ENCODE measurements at regions of chr2 and their contacts with region 1.

Region 1: DNA sequence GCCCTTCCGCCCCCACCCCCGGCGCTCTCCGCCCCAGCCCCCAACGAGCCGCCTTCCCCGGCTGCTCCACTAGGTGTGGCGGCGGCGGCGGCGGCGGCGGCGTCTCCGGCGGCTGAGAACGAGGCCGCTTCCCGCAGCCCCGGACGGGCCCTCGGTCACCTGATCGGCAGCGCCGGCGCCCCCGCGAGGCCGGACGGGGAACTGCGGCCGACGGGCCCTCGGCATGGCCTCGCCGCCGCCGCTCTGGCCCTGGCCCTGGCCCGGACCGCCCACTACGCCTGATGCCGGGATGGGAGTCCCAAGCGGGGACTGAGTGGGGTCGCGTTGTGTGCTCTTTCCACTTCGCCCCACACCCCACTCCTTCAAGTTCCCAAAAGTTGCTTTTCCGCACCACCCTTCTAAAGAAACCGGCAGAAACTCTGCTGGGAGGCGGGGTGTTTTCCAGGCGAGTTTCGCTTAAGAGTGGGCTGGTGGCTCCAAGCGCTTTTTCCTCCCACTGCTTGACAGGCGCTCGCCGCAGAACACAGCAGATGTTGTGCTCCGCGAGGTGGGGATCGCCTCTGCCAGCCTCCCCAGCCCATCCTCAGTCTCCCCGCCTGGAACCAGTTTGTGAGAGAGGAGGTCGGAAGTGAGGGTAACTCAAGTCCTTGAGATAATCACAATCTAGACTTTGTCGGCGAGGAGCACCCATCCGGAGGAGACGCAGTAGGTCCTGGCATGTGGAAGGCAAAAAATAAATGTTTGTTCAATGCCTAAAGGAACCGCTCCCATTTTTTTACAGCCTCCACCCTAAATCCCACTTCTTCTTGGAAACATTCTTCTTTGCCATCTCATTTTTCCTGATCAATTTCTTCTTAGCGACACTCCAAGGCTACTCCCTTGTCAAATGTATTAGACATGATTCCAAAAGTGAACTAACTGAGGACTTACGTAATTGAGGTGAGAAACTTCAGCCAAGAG is at the start of gene NCKAP1:
- DNase-seq: peak; percentile 73
- H3K4me3 Mint-ChIP-seq: peak within 1 kb of the TSS; percentile 82
- H3K27ac Mint-ChIP-seq: peak within 1 kb of the TSS; percentile 12
- H3K4me1 Mint-ChIP-seq: peaks cover 22% of the 10 kb centered on the region
- H3K27me3 Mint-ChIP-seq: peaks cover 67% of the 10 kb centered on the region
- total RNA-seq, gene NCKAP1: 13.2 and 20.0 TPM in 2 replicates

Region 2: GRCh38 chr2:182715896-182716668 is 322.5 kb before region 1 on chr2 and contains the start of gene DNAJC10:
- intact Hi-C with region 1: loop called (anchors 1 kb)
- DNase-seq: peak; percentile 84
- H3K4me3 Mint-ChIP-seq: no peak within 1 kb of the TSS
- H3K27ac Mint-ChIP-seq: no peak within 1 kb of the TSS
- H3K4me1 Mint-ChIP-seq: peaks cover 5% of the 10 kb centered on the region
- H3K27me3 Mint-ChIP-seq: peaks cover 16% of the 10 kb centered on the region
- total RNA-seq, gene DNAJC10: 63.5 and 64.6 TPM in 2 replicates

Region 3: DNA sequence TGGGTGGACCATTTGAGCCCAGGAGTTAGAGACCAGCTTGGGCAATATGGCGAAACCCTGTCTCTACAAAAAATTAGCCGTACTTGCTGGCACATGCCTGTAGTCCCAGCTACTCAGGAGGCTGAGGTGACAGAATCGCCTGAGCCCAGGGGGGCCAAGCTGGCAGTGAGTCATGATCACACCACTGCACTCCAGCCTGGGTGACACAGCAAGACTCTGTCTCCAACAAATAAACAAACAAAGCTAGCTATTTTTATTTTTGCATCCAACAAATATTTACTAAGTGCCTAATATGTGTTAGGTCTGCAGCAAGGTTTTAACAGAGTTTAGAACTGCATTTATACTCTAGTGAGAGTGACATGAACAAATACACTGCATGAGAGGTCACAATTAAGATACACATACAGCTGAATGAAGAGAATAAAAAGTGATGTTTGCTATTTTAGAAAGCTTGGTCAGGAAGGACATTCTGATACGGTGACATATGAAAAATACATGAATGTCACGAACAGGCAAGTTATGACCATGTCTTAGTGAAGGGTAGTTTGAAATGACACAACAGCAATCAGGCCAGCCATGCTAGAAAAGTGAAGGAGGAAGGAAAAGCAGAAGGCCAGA is 88.9 kb before region 1 on chr2:
- intact Hi-C with region 1: loop called (anchors 5 kb)
- DNase-seq: no peak
- H3K4me3 Mint-ChIP-seq: no peak overlapping the region
- H3K27ac Mint-ChIP-seq: no peak overlapping the region
- H3K4me1 Mint-ChIP-seq: peaks cover 17% of the 10 kb centered on the region
- H3K27me3 Mint-ChIP-seq: no peaks in the 10 kb centered on the region

Region 4: GRCh38 chr2:182977463-182977862 is 61.2 kb before region 1 on chr2:
- intact Hi-C with region 1: no loop called
- DNase-seq: no peak
- H3K4me3 Mint-ChIP-seq: no peak overlapping the region
- H3K27ac Mint-ChIP-seq: no peak overlapping the region
- H3K4me1 Mint-ChIP-seq: peaks cover 2% of the 10 kb centered on the region
- H3K27me3 Mint-ChIP-seq: no peaks in the 10 kb centered on the region

Region 5: DNA sequence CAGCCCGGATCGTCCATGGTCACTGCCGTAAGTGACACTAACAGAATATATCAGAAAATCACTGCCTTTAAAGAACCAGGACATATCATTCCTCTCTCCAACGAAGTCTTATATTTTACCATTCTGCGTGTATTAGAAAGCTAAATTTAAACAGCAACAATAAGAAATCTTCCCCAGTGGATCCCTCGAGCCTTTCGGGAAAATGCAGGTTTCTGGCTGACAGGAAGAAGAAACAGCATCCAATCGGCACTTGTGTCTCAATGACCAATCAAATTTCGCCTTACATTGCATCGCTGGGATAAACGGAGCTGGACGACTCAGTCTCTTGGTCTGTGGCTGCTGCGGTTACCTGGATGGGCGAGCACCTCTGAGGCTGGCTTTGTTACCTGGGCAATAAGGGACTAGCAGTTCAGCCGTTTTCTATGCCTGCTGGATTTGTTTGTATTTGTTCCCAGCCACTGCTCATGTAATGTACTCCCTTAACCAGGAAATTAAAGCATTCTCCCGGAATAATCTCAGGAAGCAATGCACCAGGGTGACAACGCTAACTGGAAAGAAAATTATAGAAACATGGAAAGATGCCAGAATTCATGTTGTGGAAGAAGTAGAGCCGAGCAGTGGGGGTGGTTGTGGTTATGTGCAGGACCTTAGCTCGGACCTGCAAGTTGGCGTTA is 40.0 kb after region 1 on chr2 and contains the start of gene DUSP19:
- intact Hi-C with region 1: loop called (anchors 1 kb)
- DNase-seq: peak; percentile 72
- H3K4me3 Mint-ChIP-seq: peak within 1 kb of the TSS; percentile 83
- H3K27ac Mint-ChIP-seq: peak within 1 kb of the TSS; percentile 21
- H3K4me1 Mint-ChIP-seq: peaks cover 7% of the 10 kb centered on the region
- H3K27me3 Mint-ChIP-seq: peaks cover 7% of the 10 kb centered on the region
- total RNA-seq, gene DUSP19: 1.6 and 1.9 TPM in 2 replicates

Region 6: GRCh38 chr2:183124222-183124956 is 85.8 kb after region 1 on chr2 and contains the start of gene NUP35:
- intact Hi-C with region 1: loop called (anchors 1 kb)
- DNase-seq: peak; percentile 74
- H3K4me3 Mint-ChIP-seq: peak within 1 kb of the TSS; percentile 94
- H3K27ac Mint-ChIP-seq: peak within 1 kb of the TSS; percentile 98
- H3K4me1 Mint-ChIP-seq: peaks cover 32% of the 10 kb centered on the region
- H3K27me3 Mint-ChIP-seq: peaks cover 4% of the 10 kb centered on the region
- total RNA-seq, gene NUP35: 30.9 and 39.3 TPM in 2 replicates

Region 7: DNA sequence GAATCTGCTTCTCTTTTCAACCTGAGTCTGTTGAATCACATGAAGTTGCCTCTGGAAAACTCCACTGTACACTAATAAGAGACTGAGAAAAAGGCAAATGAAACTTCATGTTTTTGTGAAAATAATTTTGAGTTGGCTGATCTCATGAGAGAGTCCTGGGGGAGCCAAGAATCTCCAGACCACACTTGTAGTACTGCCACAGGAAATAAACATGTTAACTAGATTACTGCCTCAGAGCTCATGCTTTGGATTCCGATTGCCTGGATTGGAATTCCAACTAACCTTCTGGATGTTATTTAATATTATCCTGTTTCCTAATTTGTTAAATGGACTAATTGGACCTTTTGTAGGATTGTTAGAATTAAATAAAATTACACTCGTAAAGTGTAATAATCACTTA is 110.9 kb after region 1 on chr2:
- intact Hi-C with region 1: no loop called
- DNase-seq: no peak
- H3K4me3 Mint-ChIP-seq: no peak overlapping the region
- H3K27ac Mint-ChIP-seq: no peak overlapping the region
- H3K4me1 Mint-ChIP-seq: peaks cover 2% of the 10 kb centered on the region
- H3K27me3 Mint-ChIP-seq: no peaks in the 10 kb centered on the region

Region 8: DNA sequence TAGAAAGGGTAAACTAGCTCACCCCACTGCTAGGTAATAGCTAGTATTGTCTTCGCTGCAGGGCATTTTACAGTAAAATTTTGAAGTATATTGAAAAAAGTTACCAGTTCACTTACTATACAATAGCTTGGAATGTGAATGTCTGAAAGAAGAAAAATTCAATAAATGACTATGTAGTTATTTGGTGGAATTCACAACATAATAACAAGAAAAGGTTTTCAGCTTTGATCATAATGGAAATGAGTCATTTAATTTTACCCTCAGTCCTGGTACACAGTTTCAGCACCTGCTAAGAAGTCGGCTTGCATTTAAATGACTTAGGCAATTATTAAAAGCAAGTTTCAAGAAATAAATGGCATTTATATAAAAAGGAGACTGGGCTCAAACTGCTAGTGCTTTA is 176.1 kb after region 1 on chr2:
- intact Hi-C with region 1: loop called (anchors 10 kb)
- DNase-seq: no peak
- H3K4me3 Mint-ChIP-seq: no peak overlapping the region
- H3K27ac Mint-ChIP-seq: no peak overlapping the region
- H3K4me1 Mint-ChIP-seq: peaks cover 28% of the 10 kb centered on the region
- H3K27me3 Mint-ChIP-seq: no peaks in the 10 kb centered on the region

Measured in activated T-helper 2 cell treated with anti-CD3 and anti-CD28 coated beads, Interferon-gamma antibody, Interleukin-2, Interleukin-4, amounts not matched to agents 10 μg/mL and 5 μg/mL and 100 μg/mL, durations not matched to agents 14 hours and 24 hours and 36 hours (primary cell).